OCI-LY7 (cell line): ENCODE measurements at regions of chr2 and their contacts with region 1.

Region 1: GRCh38 chr2:143162123-143162837 is 33.1 kb downstream of the ARHGAP15 start:
- DNase-seq: peak; percentile 69
- H3K4me3 ChIP-seq: no peak overlapping the region
- H3K27ac ChIP-seq: no peak overlapping the region
- H3K4me1 ChIP-seq: peaks cover 40% of the 10 kb centered on the region
- CTCF ChIP-seq: peak; percentile 85

Region 2: DNA sequence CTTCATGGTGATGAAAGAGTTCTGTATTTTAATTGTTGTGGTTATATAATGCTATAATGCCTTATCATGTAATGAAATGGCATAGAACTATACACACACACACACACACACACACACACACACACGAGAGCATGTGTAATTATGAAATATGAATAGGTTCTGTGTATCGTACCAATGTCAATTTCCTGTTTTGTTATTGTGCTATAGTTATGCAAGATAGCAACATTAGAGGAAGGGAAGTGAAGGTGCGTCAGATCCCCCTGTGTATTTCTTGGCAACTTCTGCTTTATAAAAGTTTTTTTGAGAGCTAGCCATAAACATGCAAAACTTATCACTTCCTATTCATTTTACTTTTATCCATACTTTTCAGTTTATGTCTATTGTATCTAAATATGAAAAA is 93.8 kb before region 1 on chr2:
- CTCF ChIA-PET with region 1: no interaction called
- POLR2A ChIA-PET with region 1: no interaction called
- intact Hi-C with region 1: no loop called
- DNase-seq: peak; percentile 5
- H3K4me3 ChIP-seq: no peak overlapping the region
- H3K27ac ChIP-seq: no peak overlapping the region
- H3K4me1 ChIP-seq: no peaks in the 10 kb centered on the region
- CTCF ChIP-seq: no peak

Region 3: GRCh38 chr2:143110758-143111428 is 51.4 kb before region 1 on chr2:
- CTCF ChIA-PET with region 1: no interaction called
- POLR2A ChIA-PET with region 1: interaction called, 3 read pairs
- intact Hi-C with region 1: loop called (anchors 5 kb)
- DNase-seq: peak; percentile 90
- H3K4me3 ChIP-seq: no peak overlapping the region
- H3K27ac ChIP-seq: no peak overlapping the region
- H3K4me1 ChIP-seq: peaks cover 7% of the 10 kb centered on the region
- CTCF ChIP-seq: peak; percentile 99

Region 4: DNA sequence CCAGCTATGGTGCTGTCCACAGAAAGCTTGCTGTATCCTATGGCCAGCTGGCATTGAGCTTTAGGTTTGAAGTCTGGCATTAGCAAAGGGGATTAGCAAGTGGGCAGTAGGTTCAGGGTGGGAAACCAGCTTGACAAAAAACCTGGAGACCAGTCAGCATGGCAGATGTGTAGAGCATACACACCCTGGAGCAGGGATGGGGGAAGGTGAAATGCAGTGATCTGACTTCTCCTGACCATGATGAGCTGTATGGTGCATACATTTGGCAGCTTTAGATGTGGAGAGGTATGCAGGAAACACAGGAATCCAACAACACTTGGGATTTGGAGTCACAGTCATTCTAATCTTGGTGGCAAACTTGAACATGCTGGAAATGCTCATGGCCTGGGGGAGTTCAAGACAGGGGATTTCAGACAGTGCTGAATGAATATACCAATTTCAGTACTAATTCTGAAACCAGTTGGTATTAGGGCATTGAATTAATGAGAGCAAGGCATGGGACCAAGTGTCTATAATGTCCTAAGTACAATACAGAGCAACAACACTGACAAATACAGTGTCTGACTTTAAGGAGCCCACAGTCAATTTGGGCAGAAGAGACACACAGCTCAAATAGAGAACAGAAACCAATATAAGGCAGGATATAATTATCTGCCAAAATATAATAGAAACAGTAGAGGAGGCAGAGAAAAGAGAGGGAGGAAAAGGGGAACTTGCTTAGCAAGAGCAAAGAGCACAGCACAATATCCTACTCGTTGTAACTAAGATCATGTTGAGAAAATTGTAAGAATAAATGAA is 21.2 kb before region 1 on chr2:
- CTCF ChIA-PET with region 1: no interaction called
- POLR2A ChIA-PET with region 1: interaction called, 21 read pairs
- intact Hi-C with region 1: no loop called
- DNase-seq: peak; percentile 83
- H3K4me3 ChIP-seq: peak overlapping the region; percentile 63
- H3K27ac ChIP-seq: peak overlapping the region; percentile 92
- H3K4me1 ChIP-seq: peaks cover 78% of the 10 kb centered on the region
- CTCF ChIP-seq: no peak

Region 5: GRCh38 chr2:143225931-143226330 is 63.7 kb after region 1 on chr2:
- CTCF ChIA-PET with region 1: no interaction called
- POLR2A ChIA-PET with region 1: no interaction called
- intact Hi-C with region 1: loop called (anchors 2 kb)
- DNase-seq: no peak
- H3K4me3 ChIP-seq: no peak overlapping the region
- H3K27ac ChIP-seq: no peak overlapping the region
- H3K4me1 ChIP-seq: no peaks in the 10 kb centered on the region
- CTCF ChIP-seq: no peak

Region 6: DNA sequence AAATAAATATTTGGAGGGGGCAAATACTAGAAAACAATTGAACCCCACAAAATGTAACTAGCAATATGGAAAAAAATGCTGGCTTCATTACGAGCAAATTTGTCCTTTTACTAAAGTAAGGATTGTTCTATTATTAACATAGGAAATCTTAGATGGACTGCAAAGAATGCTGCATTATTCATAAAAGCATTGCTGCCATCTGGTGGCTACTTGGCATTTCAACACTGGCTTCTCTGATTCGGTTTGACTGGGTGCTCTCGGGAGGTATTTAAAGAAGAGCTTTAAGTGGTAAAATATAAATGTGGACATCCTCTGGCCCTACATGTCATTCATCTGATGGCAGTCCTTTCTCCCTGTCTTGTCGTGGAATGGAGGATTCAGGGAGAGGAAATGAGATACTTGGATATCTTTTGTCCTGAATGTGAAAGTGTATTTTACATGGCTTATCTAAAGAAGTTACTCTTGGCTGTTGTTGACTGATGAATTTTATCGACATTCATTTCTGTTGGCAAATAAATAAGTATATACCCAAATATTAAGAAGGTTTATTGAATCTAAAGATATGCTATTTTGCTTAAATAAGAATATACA is 97.2 kb after region 1 on chr2:
- CTCF ChIA-PET with region 1: interaction called, 3 read pairs
- POLR2A ChIA-PET with region 1: interaction called, 3 read pairs
- intact Hi-C with region 1: loop called (anchors 5 kb)
- DNase-seq: peak; percentile 77
- H3K4me3 ChIP-seq: no peak overlapping the region
- H3K27ac ChIP-seq: no peak overlapping the region
- H3K4me1 ChIP-seq: peaks cover 30% of the 10 kb centered on the region
- CTCF ChIP-seq: peak; percentile 97